CD4-positive, alpha-beta memory T cell (primary cell): ENCODE measurements at regions of chr1 and their contacts with region 1.

Region 1: DNA sequence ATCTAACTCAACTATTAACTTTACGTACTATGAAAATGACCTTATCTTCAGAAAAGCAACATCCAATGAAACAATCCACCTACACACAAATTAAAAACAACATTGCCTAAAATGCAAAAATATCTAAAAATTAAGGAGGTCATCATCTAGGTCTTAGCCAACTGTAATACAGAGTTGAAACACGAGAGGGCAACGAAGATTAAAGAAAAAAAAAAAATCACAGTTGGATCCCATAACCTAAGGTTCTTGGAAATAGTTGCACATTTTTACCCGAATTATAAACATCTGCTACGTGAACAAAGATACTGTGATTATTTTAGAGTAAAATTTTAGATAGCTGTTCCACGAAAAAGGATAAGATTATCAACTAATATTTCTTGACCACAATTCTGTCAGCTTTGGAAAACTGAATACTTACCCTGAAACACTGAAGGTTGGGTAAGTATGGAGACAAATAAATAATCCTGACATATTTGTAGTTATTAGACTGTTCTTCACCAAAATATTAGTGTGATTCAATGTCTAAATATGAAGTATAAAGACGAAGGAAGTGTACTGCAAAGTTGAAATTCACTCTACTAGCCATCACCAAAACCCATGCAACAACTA is 88.0 kb upstream of the AK4 start:
- DNase-seq: peak in 2 of 5 donors; percentile 25 to 35
- H3K4me3 ChIP-seq: no peak overlapping the region
- H3K4me3 Mint-ChIP-seq: peak overlapping the region in 3 of 8 donors; percentile 7 to 33 (median 32)
- H3K27ac ChIP-seq: no peak overlapping the region
- H3K27ac Mint-ChIP-seq: peak overlapping the region in 6 of 7 donors; percentile 3 to 83 (median 52)
- H3K4me1 ChIP-seq: peaks cover 51% of the 10 kb centered on the region
- H3K4me1 Mint-ChIP-seq: peaks cover 41 to 54% (median 51%) of the 10 kb centered on the region in 4 donors
- H3K27me3 ChIP-seq: no peaks in the 10 kb centered on the region
- H3K27me3 Mint-ChIP-seq: no peaks in the 10 kb centered on the region

Region 2: DNA sequence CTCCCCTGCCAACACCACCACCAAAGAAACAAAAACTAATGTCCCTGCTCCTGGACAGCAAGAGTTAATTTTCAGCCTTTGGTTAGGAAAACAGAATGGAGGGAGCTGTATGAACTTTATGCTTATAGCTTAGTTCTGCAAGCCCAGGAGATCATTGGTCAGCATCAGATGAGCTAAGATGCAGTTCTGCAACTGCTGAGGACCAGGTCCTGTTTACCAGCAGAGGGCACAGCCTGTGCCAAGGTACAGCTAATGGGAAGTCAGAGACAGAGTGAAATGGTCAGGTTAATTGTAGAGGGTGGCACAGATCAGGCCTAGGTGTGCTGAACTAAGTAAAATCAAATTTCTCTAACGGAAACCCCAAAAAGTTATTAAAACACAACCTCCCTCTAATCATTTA is 1124.9 kb before region 1 on chr1:
- CTCF ChIA-PET with region 1: no interaction called
- POLR2A ChIA-PET with region 1: no interaction called
- intact Hi-C with region 1: no loop called
- DNase-seq: no peak
- H3K4me3 ChIP-seq: no peak overlapping the region
- H3K4me3 Mint-ChIP-seq: no peak overlapping the region
- H3K27ac ChIP-seq: no peak overlapping the region
- H3K27ac Mint-ChIP-seq: no peak overlapping the region
- H3K4me1 ChIP-seq: no peaks in the 10 kb centered on the region
- H3K4me1 Mint-ChIP-seq: no peaks in the 10 kb centered on the region
- H3K27me3 ChIP-seq: no peaks in the 10 kb centered on the region
- H3K27me3 Mint-ChIP-seq: peaks cover 0 to 4% of the 10 kb centered on the region in 2 donors

Region 3: DNA sequence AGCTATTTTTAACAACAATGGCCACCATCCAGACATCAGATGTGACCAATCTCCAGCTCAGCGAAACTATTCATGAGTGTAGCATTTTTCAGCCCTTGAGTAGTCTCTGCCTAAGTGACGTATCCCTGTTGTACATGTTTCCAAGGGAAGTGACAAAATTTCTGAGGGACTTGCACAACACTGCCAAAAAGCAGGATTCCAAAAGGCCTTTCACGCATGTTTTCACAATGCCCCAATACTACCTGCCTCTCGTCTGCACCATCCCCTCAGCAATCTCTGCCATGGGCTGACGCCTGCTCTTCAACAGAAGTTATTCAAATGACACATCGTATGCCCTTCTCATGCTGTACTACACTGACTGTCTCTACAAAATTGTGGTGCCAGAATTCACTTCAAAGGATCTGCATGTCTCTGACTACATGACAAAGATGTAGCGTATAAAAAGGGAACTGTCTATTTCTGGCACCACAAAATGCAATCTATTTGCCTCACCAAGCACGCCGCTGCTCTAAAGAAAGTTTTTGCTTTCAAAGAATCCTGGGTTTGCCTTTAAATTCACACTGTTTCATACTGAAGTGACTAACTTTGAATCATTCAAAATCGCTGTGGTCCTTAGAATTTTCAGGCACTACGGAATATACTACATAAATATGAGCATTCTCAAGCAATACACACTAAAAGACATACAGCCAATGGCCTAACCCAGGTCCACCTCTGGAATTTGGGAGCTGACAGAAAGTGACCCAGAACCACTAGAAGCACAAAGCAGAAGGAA is 126.6 kb before region 1 on chr1:
- CTCF ChIA-PET with region 1: no interaction called
- POLR2A ChIA-PET with region 1: no interaction called
- intact Hi-C with region 1: no loop called
- DNase-seq: no peak
- H3K4me3 ChIP-seq: no peak overlapping the region
- H3K4me3 Mint-ChIP-seq: peak overlapping the region in 7 of 8 donors; percentile 11 to 68 (median 41)
- H3K27ac ChIP-seq: no peak overlapping the region
- H3K27ac Mint-ChIP-seq: peak overlapping the region in 6 of 7 donors; percentile 9 to 86 (median 45)
- H3K4me1 ChIP-seq: peaks cover 62% of the 10 kb centered on the region
- H3K4me1 Mint-ChIP-seq: peaks cover 67 to 93% (median 81%) of the 10 kb centered on the region in 4 donors
- H3K27me3 ChIP-seq: no peaks in the 10 kb centered on the region
- H3K27me3 Mint-ChIP-seq: no peaks in the 10 kb centered on the region

Region 4: GRCh38 chr1:65048335-65048734 is 11.7 kb before region 1 on chr1:
- CTCF ChIA-PET with region 1: interaction called, 8 read pairs
- POLR2A ChIA-PET with region 1: interaction called, 42 read pairs
- intact Hi-C with region 1: loop called (anchors 2 kb)
- DNase-seq: no peak
- H3K4me3 ChIP-seq: no peak overlapping the region
- H3K4me3 Mint-ChIP-seq: peak overlapping the region in 2 of 8 donors; percentile 17 to 30
- H3K27ac ChIP-seq: no peak overlapping the region
- H3K27ac Mint-ChIP-seq: peak overlapping the region in 1 of 7 donors; percentile 53
- H3K4me1 ChIP-seq: peaks cover 32% of the 10 kb centered on the region
- H3K4me1 Mint-ChIP-seq: peaks cover 43 to 72% (median 54%) of the 10 kb centered on the region in 4 donors
- H3K27me3 ChIP-seq: no peaks in the 10 kb centered on the region
- H3K27me3 Mint-ChIP-seq: no peaks in the 10 kb centered on the region

Region 5: GRCh38 chr1:65209005-65209885 is 149.2 kb after region 1 on chr1:
- CTCF ChIA-PET with region 1: interaction called, 4 read pairs
- POLR2A ChIA-PET with region 1: no interaction called
- intact Hi-C with region 1: loop called (anchors 1 kb)
- DNase-seq: peak in 3 of 5 donors; percentile 6 to 11 (median 7)
- H3K4me3 ChIP-seq: no peak overlapping the region
- H3K4me3 Mint-ChIP-seq: no peak overlapping the region
- H3K27ac ChIP-seq: no peak overlapping the region
- H3K27ac Mint-ChIP-seq: no peak overlapping the region
- H3K4me1 ChIP-seq: no peaks in the 10 kb centered on the region
- H3K4me1 Mint-ChIP-seq: peaks cover 0 to 3% (median 0%) of the 10 kb centered on the region in 4 donors
- H3K27me3 ChIP-seq: no peaks in the 10 kb centered on the region
- H3K27me3 Mint-ChIP-seq: peaks cover 0 to 6% of the 10 kb centered on the region in 2 donors